ENCODE measurements at regions of chr10 and their contacts with region 1.

Region 1: GRCh38 chr10:125521721-125522680 is 161.0 kb downstream of the TEX36 start:
- DNase-seq: peak; percentile 20
- H3K27ac ChIP-seq: no peak overlapping the region
- CTCF ChIP-seq: peak; percentile 73

Region 2: DNA sequence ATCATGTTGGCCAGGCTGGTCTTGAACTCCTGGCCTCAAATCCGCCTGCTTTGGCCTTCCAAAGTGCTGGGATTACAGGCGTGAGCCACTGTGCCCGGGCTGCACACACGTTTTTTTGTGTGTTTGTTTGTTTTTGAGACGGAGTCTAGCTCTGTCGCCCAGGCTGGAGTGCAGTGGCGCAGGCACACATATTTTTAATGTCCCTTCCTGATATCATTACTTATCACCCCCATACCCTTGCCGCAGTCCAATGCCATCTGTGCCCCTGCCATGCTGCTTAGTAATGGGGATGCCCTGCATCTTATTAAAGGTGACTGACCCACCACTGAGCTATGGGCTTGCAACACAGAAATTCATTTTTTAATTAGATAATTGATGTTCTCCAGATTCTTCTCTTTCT is 19.7 kb before region 1 on chr10:
- CTCF ChIA-PET with region 1: interaction called, 11 read pairs
- POLR2A ChIA-PET with region 1: no interaction called
- DNase-seq: no peak
- H3K27ac ChIP-seq: no peak overlapping the region
- CTCF ChIP-seq: no peak

Region 3: DNA sequence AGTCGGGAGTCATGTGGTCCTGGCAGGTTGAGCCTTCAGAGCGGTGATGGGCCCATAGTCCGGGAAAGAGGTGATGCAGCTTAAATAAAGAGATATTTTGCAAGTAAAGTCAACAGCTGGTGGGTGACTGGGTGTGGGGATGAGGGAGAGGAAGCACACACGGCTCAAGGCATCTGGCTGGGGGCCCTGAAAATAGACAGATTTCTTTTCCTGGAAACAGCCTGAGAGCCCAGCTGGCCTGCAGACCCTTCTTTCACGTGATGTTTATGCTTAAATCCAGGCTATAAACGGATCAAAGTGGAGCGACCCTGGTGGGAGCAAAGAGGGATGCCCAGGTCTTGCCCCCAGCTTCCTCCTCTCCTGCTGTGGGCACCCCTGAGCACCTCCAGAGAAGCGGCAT is 11.9 kb after region 1 on chr10:
- CTCF ChIA-PET with region 1: interaction called, 10 read pairs
- POLR2A ChIA-PET with region 1: no interaction called
- DNase-seq: no peak
- H3K27ac ChIP-seq: no peak overlapping the region
- CTCF ChIP-seq: no peak

Measured in RWPE1 (cell line).